Prostate gland (tissue), 2 donors: ENCODE measurements at regions of chr1 and their contacts with region 1.

Region 1: DNA sequence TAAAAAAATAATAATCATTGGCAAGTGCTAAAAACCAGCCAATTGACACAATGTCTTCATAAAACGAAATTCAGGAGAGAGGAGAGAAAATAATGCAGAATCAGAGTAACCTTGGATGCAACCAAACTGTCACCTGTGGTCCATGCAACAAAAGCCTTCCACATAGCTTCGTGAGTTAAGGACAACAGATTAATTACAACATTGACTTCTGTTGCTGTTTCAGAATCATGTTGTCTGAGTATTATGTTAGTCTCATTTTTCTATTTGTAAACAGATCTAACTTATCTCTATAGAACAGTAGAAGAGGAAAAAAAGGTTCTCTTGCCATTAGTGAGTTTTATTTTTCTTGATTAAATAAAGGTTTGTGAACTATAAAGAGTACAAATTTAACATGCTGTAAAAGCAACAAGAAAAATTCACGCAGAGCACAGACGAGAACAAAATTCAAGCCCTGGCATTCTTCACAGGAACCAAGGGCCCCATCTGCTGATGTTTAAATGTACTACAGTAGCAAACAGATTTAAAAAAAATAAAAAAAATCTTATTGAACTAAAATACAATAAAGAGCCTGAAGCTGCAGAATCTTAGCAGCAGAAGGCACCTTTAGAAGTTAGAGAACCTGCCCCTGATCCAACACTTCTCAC is 381.1 kb upstream of the PKN2 start:
- DNase-seq: peak; percentile 8
- H3K4me3 ChIP-seq: no peak overlapping the region
- H3K27ac ChIP-seq: no peak overlapping the region
- H3K4me1 ChIP-seq: no peaks in the 10 kb centered on the region
- H3K27me3 ChIP-seq: no peaks in the 10 kb centered on the region
- CTCF ChIP-seq: peak in 3 of 4 experiments; percentile 39 to 66 (median 55)
- POLR2A ChIP-seq: no peak

Region 2: GRCh38 chr1:87292684-87293493 is 1010.1 kb before region 1 on chr1:
- intact Hi-C with region 1: loop called (anchors 5 kb)
- DNase-seq: peak; percentile 49
- H3K4me3 ChIP-seq: no peak overlapping the region
- H3K27ac ChIP-seq: no peak overlapping the region
- H3K4me1 ChIP-seq: no peaks in the 10 kb centered on the region
- H3K27me3 ChIP-seq: no peaks in the 10 kb centered on the region
- CTCF ChIP-seq: peak; percentile 50 to 83 (median 71)
- POLR2A ChIP-seq: no peak

Region 3: GRCh38 chr1:88180449-88181108 is 122.4 kb before region 1 on chr1:
- intact Hi-C with region 1: loop called (anchors 2 kb)
- DNase-seq: peak; percentile 38
- H3K4me3 ChIP-seq: no peak overlapping the region
- H3K27ac ChIP-seq: no peak overlapping the region
- H3K4me1 ChIP-seq: no peaks in the 10 kb centered on the region
- H3K27me3 ChIP-seq: no peaks in the 10 kb centered on the region
- CTCF ChIP-seq: peak; percentile 70 to 78 (median 73)
- POLR2A ChIP-seq: no peak

Region 4: DNA sequence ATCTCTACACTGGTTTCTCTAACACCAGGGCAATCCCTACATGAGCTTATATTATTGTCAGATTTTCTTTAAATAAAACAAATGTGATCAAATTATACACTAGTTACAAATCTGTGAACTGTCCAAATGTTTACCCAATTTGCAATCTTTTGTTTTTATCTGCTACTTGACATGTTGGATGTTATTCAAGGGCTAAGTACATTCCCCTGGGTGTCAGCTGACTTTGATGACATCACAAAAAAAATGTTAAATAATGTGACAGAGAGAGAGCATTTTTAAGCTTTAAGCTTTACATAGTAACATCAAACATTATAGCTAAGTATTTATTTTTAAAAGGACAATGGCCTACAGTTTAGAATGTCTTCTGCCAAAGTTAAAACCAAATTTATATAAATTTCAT is 50.2 kb before region 1 on chr1:
- intact Hi-C with region 1: no loop called
- DNase-seq: no peak
- H3K4me3 ChIP-seq: no peak overlapping the region
- H3K27ac ChIP-seq: no peak overlapping the region
- H3K4me1 ChIP-seq: no peaks in the 10 kb centered on the region
- H3K27me3 ChIP-seq: no peaks in the 10 kb centered on the region
- CTCF ChIP-seq: no peak
- POLR2A ChIP-seq: no peak

Region 5: DNA sequence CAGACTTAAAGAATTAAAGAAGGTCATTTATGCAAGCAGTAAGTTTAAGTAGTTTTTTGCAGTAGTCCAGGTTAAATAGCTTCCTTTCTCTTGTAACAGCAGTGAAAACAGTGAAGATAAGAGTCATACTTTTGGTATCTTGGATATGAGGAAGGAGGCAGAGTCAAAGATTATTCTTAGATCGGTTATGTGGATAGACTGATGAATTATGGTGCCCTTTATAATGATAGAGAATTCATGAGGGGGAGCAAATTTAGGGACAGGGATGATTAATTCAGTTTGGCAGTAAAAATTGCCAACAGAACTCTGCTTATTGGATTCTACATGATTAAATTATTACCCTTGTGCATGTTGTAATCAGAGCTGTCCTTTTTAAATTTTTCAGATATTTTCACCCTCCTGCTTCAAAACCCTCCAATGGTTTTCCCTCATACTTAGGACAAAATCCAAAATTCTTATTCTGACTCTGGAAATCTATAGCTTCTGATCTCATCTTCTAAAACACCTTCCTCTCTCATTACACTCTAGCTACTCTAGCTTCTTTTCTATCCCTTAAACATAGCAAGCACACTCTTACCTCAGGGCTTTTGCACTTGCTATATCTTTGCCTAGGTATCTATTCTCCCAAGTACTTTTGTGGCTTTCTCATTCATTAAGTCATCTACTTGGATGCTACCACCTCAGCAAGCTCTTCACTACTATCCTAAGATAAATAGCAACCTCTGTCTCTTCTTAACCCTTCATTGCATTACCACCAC is 460.9 kb after region 1 on chr1:
- intact Hi-C with region 1: no loop called
- DNase-seq: no peak
- H3K4me3 ChIP-seq: no peak overlapping the region
- H3K27ac ChIP-seq: no peak overlapping the region
- H3K4me1 ChIP-seq: no peaks in the 10 kb centered on the region
- H3K27me3 ChIP-seq: no peaks in the 10 kb centered on the region
- CTCF ChIP-seq: no peak
- POLR2A ChIP-seq: no peak